Activated CD4-positive, alpha-beta memory T cell treated with anti-CD3 and anti-CD28 coated beads for 36 hours (primary cell): ENCODE measurements at regions of chr11 and their contacts with region 1.

Region 1: DNA sequence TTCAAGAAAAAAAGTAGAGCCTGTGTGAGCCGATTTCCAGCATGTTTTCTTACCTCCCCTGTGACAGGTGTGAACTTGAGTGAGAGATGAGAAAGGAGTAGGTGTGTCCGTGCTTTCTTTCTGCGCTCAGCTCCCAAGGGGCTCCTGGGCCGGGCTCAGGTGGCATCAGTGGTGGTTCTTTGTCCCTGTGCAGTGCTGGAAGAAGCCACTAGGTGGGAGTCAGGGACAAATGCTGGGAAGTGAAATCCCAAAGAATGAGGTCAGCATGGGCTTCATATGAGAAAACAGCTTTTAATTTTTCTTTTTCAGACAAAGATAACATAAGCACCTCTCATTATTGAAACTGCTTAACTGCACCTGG is 57.8 kb downstream of the PPFIBP2 start:
- DNase-seq: peak; percentile 44
- H3K4me3 Mint-ChIP-seq: no peak overlapping the region
- H3K27ac Mint-ChIP-seq: no peak overlapping the region
- H3K4me1 Mint-ChIP-seq: peaks cover 11% of the 10 kb centered on the region
- H3K27me3 Mint-ChIP-seq: peaks cover 1% of the 10 kb centered on the region

Region 2: DNA sequence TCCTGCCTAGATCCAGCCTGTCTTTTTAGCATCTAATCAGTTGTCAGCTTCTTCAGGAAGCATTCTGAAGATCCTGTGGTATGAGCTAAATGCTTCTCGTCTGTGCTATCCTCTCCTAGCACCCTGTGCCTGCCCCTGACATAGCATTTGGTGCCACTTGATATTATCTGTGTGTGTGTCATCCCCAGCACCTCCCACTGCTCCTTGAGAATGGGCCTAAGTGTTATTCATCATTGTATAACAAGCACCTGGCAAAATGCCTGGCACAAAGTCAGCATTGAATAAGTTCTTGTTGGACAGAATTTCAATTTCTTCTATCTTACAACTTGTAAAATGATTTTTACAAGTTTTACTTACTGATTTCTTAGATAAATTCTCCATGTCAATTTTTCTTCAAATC is 114.4 kb before region 1 on chr11:
- CTCF ChIA-PET with region 1: no interaction called
- POLR2A ChIA-PET with region 1: no interaction called
- intact Hi-C with region 1: no loop called
- DNase-seq: no peak
- H3K4me3 Mint-ChIP-seq: no peak overlapping the region
- H3K27ac Mint-ChIP-seq: no peak overlapping the region
- H3K4me1 Mint-ChIP-seq: peaks cover 1% of the 10 kb centered on the region
- H3K27me3 Mint-ChIP-seq: no peaks in the 10 kb centered on the region

Region 3: DNA sequence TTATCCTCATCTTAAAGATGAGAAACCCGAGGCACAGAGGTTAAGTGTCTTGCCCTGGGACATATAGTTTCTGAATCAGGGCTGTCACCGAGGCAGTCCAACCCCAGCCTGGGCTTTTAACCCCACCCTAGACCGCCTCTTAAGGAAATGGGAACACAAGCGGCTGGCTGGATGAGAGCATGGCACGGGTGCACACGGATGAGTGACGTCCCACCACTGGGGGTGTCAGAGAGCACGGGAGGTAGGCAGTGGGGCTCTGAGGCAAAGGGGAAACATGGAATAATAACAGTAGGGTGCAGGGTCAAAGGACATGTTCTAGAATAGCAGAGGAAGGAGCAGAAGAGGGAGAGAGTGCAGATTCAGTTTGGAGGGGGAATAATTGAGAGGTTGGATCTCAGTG is 35.5 kb before region 1 on chr11:
- CTCF ChIA-PET with region 1: no interaction called
- POLR2A ChIA-PET with region 1: no interaction called
- intact Hi-C with region 1: no loop called
- DNase-seq: no peak
- H3K4me3 Mint-ChIP-seq: no peak overlapping the region
- H3K27ac Mint-ChIP-seq: no peak overlapping the region
- H3K4me1 Mint-ChIP-seq: peaks cover 55% of the 10 kb centered on the region
- H3K27me3 Mint-ChIP-seq: no peaks in the 10 kb centered on the region

Region 4: DNA sequence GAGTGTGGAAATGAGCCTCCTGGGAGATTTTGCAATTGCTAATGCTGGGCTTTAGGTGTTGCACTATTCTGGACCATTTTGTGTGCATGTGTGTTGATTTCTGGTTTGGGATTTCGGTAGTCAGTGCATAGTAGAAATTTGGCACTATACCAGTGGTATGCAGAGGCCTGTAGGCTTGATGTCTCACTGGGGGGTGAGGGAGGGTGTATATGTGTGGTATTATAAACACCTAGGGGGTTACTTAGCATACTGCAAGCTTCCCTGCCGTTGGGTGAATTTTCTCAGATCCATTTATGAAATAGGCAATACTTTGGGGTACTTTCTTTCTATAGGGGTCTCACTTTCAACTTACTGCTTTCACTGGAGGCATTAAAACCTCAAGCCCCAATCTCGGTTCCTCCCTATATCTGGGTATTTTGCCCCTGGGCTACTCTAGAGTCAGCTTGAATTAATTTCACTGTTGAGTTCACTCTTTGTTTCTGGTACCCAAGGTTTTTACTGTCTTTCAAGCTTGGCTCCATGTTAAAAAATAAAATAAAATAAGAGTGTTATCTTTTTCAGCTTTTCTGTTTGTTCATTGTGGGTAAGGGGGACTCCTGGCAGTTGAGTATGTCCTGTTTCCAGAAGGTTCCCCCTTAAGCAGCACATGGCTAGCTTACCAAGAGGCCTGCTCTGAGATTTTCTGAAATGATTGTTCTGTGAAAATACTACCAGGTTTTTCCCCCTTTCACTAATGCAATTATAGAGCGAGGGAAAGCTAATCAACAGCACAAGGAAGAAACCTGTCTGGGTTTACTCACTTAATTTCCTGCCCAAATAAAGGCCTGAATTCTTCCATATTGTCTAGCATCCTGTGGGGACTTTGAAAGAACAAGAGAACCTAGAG is 12.0 kb before region 1 on chr11:
- CTCF ChIA-PET with region 1: no interaction called
- POLR2A ChIA-PET with region 1: no interaction called
- intact Hi-C with region 1: no loop called
- DNase-seq: no peak
- H3K4me3 Mint-ChIP-seq: no peak overlapping the region
- H3K27ac Mint-ChIP-seq: no peak overlapping the region
- H3K4me1 Mint-ChIP-seq: no peaks in the 10 kb centered on the region
- H3K27me3 Mint-ChIP-seq: no peaks in the 10 kb centered on the region

Region 5: DNA sequence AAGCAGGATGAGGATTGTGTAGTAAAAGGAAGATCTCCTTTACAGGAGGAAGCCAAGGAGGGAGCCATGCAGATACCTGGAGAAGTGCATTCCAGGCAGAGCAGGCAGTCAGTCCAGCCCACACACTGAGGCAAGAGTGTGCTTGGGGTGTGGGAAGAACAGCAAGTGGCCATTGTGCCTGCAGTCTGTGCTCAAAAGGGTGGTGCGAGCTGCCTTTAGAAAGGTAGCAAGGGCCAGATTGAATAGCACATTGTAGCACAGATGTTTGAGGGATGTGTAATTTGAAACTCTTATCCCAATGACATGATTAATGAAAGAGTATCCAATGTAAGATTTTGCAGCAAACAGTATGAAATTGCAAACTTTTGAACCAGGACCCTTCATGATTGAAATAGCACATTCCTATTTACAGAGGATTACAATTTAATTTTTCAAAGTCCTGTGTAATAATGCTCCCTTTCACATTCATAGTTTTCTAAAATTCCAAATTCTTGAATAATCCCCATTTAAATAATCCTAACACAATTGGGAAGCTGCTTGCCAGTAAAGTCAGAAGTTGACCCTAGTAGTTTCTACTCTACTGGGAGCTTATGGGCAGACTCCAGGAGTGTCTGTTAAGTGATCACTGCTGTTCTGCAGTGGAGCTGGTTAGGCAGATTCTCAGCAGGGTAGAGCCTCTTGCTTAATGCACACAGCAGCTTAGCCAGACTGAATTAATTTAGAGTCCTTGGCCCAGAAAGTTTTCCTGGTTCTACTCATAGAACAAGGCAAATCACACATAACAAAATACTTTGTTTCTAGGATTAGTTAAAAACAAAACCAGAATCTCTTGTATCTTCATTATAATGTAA is 23.6 kb after region 1 on chr11:
- CTCF ChIA-PET with region 1: interaction called, 3 read pairs
- POLR2A ChIA-PET with region 1: no interaction called
- intact Hi-C with region 1: loop called (anchors 1 kb)
- DNase-seq: no peak
- H3K4me3 Mint-ChIP-seq: no peak overlapping the region
- H3K27ac Mint-ChIP-seq: no peak overlapping the region
- H3K4me1 Mint-ChIP-seq: peaks cover 22% of the 10 kb centered on the region
- H3K27me3 Mint-ChIP-seq: no peaks in the 10 kb centered on the region

Region 6: GRCh38 chr11:7665473-7666291 is 94.1 kb after region 1 on chr11:
- CTCF ChIA-PET with region 1: interaction called, 17 read pairs
- POLR2A ChIA-PET with region 1: no interaction called
- intact Hi-C with region 1: loop called (anchors 2 kb)
- DNase-seq: peak; percentile 85
- H3K4me3 Mint-ChIP-seq: no peak overlapping the region
- H3K27ac Mint-ChIP-seq: no peak overlapping the region
- H3K4me1 Mint-ChIP-seq: peaks cover under 1% of the 10 kb centered on the region
- H3K27me3 Mint-ChIP-seq: no peaks in the 10 kb centered on the region

Region 7: DNA sequence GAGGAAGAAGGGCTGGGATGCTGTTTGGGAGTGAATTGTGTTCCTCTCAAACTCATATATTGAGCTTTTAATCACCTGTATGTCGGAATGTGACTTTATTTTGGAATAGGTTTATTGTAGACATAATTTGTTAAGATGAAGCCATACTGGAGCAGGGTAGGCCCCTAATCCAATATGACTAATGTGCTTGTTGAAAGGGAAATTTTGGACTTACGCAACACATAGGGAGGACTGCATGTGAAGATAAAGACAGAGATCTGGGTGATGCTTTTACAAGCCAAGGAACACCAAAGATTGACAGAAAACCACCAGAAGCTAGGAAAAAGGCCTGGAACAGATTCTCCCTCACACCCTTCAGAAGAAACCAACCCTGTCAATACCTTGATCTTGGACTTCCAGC is 177.8 kb after region 1 on chr11:
- CTCF ChIA-PET with region 1: no interaction called
- POLR2A ChIA-PET with region 1: no interaction called
- intact Hi-C with region 1: no loop called
- DNase-seq: no peak
- H3K4me3 Mint-ChIP-seq: no peak overlapping the region
- H3K27ac Mint-ChIP-seq: no peak overlapping the region
- H3K4me1 Mint-ChIP-seq: peaks cover 3% of the 10 kb centered on the region
- H3K27me3 Mint-ChIP-seq: peaks cover 4% of the 10 kb centered on the region